WTC11 (cell line): ENCODE measurements at regions of chr1 and their contacts with region 1.

Region 1: DNA sequence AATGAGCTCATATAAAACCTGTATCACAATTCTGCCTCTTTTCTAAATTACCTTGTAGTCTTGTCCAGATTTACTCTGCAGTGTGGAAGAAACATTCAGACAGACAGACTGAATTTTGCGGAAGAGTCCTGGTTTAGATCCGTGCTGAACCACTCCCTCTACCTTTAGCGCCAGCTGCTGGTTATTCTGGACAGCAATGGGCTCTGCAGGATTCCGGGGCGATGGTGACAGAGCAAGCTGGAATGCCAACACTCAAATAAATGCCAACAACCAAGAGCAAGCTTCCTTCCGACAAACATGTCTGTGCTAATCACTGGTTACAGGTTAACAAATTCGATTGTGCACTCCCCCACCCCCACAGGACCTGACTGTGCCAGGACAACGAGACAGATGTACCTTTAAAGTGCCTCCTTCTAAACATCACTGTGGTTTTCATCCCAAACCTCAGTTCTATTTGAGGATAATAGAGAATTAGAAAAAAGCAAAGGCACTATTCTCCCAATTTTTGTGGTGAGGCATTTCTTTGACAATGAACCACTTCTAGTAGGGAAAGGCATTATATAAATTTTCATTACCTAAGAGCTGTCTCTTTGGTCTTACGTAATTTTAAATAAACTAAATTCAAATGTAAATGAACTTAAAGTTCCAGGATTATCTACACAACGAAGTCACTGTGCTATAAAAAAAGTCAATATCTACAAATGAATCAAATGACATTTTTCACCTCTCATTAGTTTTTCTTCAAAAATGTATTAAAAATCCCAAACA is 90.4 kb downstream of the INTS7 start:
- DNase-seq: peak; percentile 55
- ATAC-seq: peak; percentile 86
- H3K4me3 Mint-ChIP-seq: no peak overlapping the region
- H3K27ac Mint-ChIP-seq: no peak overlapping the region
- H3K4me1 Mint-ChIP-seq: peaks cover 25% of the 10 kb centered on the region
- H3K27me3 Mint-ChIP-seq: no peaks in the 10 kb centered on the region; the same call in none of the 2 replicates
- CTCF ChIP-seq: no peak

Region 2: DNA sequence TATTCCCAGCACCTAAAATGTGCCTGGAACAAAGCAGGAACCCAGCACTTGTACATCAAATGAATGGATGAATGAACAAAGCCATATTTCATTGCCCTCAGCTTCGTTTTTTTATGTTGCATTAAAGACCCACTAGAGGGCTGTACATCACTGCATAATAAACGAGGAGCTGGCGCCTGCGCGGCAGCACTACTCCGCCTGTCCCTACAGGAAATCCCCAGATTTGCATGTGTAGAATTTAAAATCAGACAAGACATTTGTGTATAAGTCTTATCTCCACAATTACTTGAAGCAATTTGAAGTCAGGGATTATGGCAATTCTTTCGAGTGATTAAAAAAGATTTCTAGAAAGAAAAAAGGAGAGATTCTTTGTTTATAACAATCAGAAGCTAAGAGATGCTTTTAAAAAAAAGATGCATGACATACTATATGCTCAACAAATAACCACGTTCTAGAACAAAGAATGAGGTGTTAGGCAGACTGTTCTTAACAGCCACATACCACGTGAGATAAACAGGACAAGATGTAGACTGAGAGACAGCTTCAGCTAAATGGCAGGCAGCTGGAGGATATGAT is 264.1 kb before region 1 on chr1:
- CTCF ChIA-PET with region 1: interaction called, 14 read pairs
- POLR2A ChIA-PET with region 1: no interaction called
- DNase-seq: peak; percentile 46
- ATAC-seq: peak; percentile 57
- H3K4me3 Mint-ChIP-seq: no peak overlapping the region
- H3K27ac Mint-ChIP-seq: no peak overlapping the region
- H3K4me1 Mint-ChIP-seq: peaks cover 10% of the 10 kb centered on the region
- H3K27me3 Mint-ChIP-seq: no peaks in the 10 kb centered on the region
- CTCF ChIP-seq: peak; percentile 22; the same call in 1 of the 2 replicates

Region 3: GRCh38 chr1:211928993-211929637 is 15.8 kb before region 1 on chr1:
- CTCF ChIA-PET with region 1: interaction called, 10 read pairs
- POLR2A ChIA-PET with region 1: no interaction called
- DNase-seq: no peak
- ATAC-seq: peak; percentile 47
- H3K4me3 Mint-ChIP-seq: no peak overlapping the region
- H3K27ac Mint-ChIP-seq: no peak overlapping the region; the same call in 1 of the 2 replicates
- H3K4me1 Mint-ChIP-seq: peaks cover 25% of the 10 kb centered on the region
- H3K27me3 Mint-ChIP-seq: no peaks in the 10 kb centered on the region
- CTCF ChIP-seq: no peak

Region 4: DNA sequence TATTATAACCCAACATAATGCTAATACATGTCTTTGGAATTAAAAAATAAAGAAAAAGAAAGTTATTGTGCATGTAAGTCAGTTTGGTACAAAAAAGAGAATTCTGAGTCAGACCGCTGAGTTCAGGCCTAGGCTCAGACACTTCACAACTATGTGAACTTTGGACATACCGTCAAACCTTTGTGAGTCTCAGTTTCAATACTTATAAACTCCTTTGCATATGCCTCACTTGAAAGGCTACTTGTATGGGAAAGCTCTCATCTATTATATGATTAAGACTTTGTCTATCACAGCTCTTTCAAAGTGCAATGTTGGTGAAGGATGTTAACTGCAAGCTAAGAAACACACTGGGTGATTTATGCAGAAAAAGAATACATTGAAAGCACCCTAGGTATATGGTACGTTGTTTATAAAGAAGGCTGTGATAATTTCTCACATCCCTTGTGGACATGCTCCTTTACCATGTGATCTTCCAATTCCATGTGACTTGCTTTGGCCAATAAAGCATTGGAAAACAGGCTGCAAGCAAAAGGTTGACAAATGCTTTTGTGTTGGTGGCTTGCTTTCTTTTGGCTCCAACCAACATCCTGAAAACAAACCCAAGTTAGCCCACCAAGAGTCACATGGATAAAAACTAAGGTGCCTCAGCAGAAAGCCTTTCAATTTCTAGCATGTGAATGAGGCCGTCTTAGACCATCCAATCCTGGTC is 40.8 kb after region 1 on chr1:
- CTCF ChIA-PET with region 1: no interaction called
- POLR2A ChIA-PET with region 1: no interaction called
- DNase-seq: no peak
- ATAC-seq: no peak
- H3K4me3 Mint-ChIP-seq: no peak overlapping the region
- H3K27ac Mint-ChIP-seq: no peak overlapping the region
- H3K4me1 Mint-ChIP-seq: no peaks in the 10 kb centered on the region
- H3K27me3 Mint-ChIP-seq: no peaks in the 10 kb centered on the region
- CTCF ChIP-seq: no peak

Region 5: GRCh38 chr1:212002536-212002935 is 57.6 kb after region 1 on chr1:
- CTCF ChIA-PET with region 1: no interaction called
- POLR2A ChIA-PET with region 1: no interaction called
- DNase-seq: no peak
- ATAC-seq: no peak
- H3K4me3 Mint-ChIP-seq: no peak overlapping the region
- H3K27ac Mint-ChIP-seq: no peak overlapping the region
- H3K4me1 Mint-ChIP-seq: no peaks in the 10 kb centered on the region
- H3K27me3 Mint-ChIP-seq: no peaks in the 10 kb centered on the region
- CTCF ChIP-seq: no peak